ENCODE measurements at regions of chr3 and their contacts with region 1.

Region 1: GRCh38 chr3:129316131-129317013 is 37.7 kb downstream of the HMCES start:
- DNase-seq: no peak
- H3K4me3 ChIP-seq: peak overlapping the region; percentile 91
- H3K27ac ChIP-seq: peak overlapping the region; percentile 77
- H3K27me3 ChIP-seq: no peaks in the 10 kb centered on the region
- CTCF ChIP-seq: peak; percentile 54

Region 2: GRCh38 chr3:129176051-129176450 is 140.3 kb before region 1 on chr3:
- CTCF ChIA-PET with region 1: no interaction called
- POLR2A ChIA-PET with region 1: no interaction called
- DNase-seq: no peak
- H3K4me3 ChIP-seq: no peak overlapping the region
- H3K27ac ChIP-seq: no peak overlapping the region
- H3K27me3 ChIP-seq: no peaks in the 10 kb centered on the region
- CTCF ChIP-seq: no peak

Region 3: GRCh38 chr3:129278439-129278970 is 37.9 kb before region 1 on chr3 and contains the start of gene HMCES:
- CTCF ChIA-PET with region 1: interaction called, 4 read pairs
- POLR2A ChIA-PET with region 1: interaction called, 39 read pairs
- DNase-seq: peak; percentile 32
- H3K4me3 ChIP-seq: peak within 1 kb of the TSS; percentile 78
- H3K27ac ChIP-seq: peak within 1 kb of the TSS; percentile 58
- H3K27me3 ChIP-seq: no peaks in the 10 kb centered on the region
- CTCF ChIP-seq: no peak
- polyA plus RNA-seq, gene HMCES: 19.9 and 22.6 TPM in 2 replicates

Region 4: DNA sequence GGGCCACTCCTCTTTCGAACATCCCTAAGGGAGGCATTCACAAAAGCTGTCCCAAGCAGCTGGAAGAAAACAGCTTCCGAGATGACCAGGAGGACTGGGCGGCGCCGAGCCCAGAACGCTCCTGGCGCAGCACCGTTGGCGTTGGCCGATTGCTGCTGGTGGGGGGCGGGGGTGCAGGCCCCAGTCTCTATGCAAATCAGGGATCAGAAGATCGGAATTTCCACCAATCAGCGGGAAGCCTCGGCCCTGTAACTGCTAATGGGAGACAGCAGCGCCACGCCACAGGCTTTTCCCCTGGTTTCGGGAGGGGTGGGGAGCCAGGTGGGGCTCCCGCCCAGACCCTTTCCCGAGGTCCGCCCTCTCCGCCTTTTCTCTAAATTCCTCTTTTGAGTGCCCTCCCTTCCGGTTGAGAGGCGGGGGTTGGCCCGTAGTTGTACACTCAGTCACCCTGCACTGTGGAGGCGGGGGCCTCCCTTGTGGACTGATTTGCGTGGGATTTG is 10.7 kb before region 1 on chr3:
- CTCF ChIA-PET with region 1: interaction called, 8 read pairs
- POLR2A ChIA-PET with region 1: interaction called, 11 read pairs
- DNase-seq: no peak
- H3K4me3 ChIP-seq: peak overlapping the region; percentile 13; the same call in 1 of the 2 replicates
- H3K27ac ChIP-seq: peak overlapping the region; percentile 73
- H3K27me3 ChIP-seq: no peaks in the 10 kb centered on the region
- CTCF ChIP-seq: no peak

Region 5: GRCh38 chr3:129330409-129330808 is 14.0 kb after region 1 on chr3:
- CTCF ChIA-PET with region 1: interaction called, 4 read pairs
- POLR2A ChIA-PET with region 1: interaction called, 19 read pairs
- DNase-seq: no peak
- H3K4me3 ChIP-seq: no peak overlapping the region
- H3K27ac ChIP-seq: no peak overlapping the region
- H3K27me3 ChIP-seq: peaks cover 3% of the 10 kb centered on the region
- CTCF ChIP-seq: no peak

Region 6: DNA sequence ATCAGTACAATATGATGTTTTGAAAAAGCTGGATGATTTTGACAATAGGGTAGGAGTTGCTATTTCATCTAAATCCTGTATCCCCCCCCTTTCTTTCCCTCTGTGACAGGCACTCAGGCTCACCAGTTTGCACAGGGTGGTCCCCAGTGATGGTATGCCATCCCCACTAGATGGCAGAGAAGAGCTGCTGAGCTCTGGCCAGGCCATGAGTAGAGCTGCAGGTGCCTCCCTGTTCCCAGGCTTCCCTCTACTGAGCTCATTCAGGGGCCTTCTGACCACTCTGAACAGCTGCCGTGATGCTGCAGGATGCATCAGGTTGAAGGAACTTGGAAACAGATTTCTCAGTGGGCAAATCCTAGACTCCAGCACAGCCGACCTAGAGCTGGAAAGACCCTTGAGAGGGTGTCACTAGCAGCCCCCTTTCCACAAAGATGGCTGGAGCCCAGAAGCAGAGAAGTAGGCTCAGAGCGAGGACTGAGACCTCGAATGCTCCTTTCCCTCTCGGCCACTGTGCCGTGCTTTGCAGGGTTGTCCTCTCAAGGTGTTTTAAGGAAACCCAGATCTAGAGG is 67.0 kb after region 1 on chr3:
- CTCF ChIA-PET with region 1: interaction called, 11 read pairs
- POLR2A ChIA-PET with region 1: interaction called, 5 read pairs
- DNase-seq: peak; percentile 49
- H3K4me3 ChIP-seq: no peak overlapping the region
- H3K27ac ChIP-seq: no peak overlapping the region
- H3K27me3 ChIP-seq: no peaks in the 10 kb centered on the region
- CTCF ChIP-seq: peak; percentile 91

Region 7: GRCh38 chr3:129413687-129414506 is 97.5 kb after region 1 on chr3:
- CTCF ChIA-PET with region 1: no interaction called
- POLR2A ChIA-PET with region 1: interaction called, 11 read pairs
- DNase-seq: peak; percentile 88
- H3K4me3 ChIP-seq: no peak overlapping the region
- H3K27ac ChIP-seq: peak overlapping the region; percentile 96
- H3K27me3 ChIP-seq: no peaks in the 10 kb centered on the region
- CTCF ChIP-seq: no peak

Region 8: GRCh38 chr3:129596194-129597086 is 280.1 kb after region 1 on chr3:
- CTCF ChIA-PET with region 1: no interaction called
- POLR2A ChIA-PET with region 1: interaction called, 13 read pairs
- DNase-seq: peak; percentile 77
- H3K4me3 ChIP-seq: peak overlapping the region; percentile 10; the same call in 1 of the 2 replicates
- H3K27ac ChIP-seq: peak overlapping the region; percentile 94
- H3K27me3 ChIP-seq: no peaks in the 10 kb centered on the region
- CTCF ChIP-seq: no peak

Measured in AG04450 (cell line).